Activated CD4-positive, alpha-beta T cell treated with anti-CD3 and anti-CD28 coated beads for 36 hours (primary cell): ENCODE measurements at regions of chr9 and their contacts with region 1.

Region 1: GRCh38 chr9:112097712-112098688 is 77.1 kb downstream of the SUSD1 start:
- DNase-seq: peak; percentile 82
- ATAC-seq: peak; percentile 90
- H3K4me3 Mint-ChIP-seq: no peak overlapping the region
- H3K27ac Mint-ChIP-seq: no peak overlapping the region
- H3K4me1 Mint-ChIP-seq: peaks cover 13% of the 10 kb centered on the region
- H3K27me3 Mint-ChIP-seq: no peaks in the 10 kb centered on the region

Region 2: GRCh38 chr9:112037281-112038016 is 60.6 kb before region 1 on chr9:
- CTCF ChIA-PET with region 1: no interaction called
- POLR2A ChIA-PET with region 1: no interaction called
- intact Hi-C with region 1: no loop called
- DNase-seq: peak; percentile 82
- ATAC-seq: peak; percentile 95
- H3K4me3 Mint-ChIP-seq: no peak overlapping the region
- H3K27ac Mint-ChIP-seq: peak overlapping the region; percentile 74
- H3K4me1 Mint-ChIP-seq: peaks cover 64% of the 10 kb centered on the region
- H3K27me3 Mint-ChIP-seq: peaks cover 11% of the 10 kb centered on the region

Region 3: DNA sequence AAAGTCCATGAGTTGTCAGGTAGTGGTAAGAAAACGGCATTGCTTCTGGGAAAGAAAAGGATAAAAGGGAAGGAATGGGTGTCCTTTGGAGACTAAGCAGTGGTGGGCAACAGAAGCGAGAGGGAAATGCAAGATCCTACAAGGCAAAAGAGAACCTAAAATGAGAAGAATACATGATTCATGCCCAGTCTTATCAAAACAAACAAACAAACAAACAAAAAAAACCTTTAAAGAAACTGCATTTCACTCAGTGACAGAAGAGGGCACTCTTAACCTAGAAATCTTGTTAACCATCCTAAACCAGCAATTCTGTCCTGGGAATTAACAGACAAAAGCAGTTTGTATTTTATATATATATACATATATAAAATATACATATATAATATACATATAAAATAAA is 11.4 kb before region 1 on chr9:
- CTCF ChIA-PET with region 1: interaction called, 17 read pairs
- POLR2A ChIA-PET with region 1: interaction called, 5 read pairs
- intact Hi-C with region 1: no loop called
- DNase-seq: no peak
- ATAC-seq: no peak
- H3K4me3 Mint-ChIP-seq: no peak overlapping the region
- H3K27ac Mint-ChIP-seq: no peak overlapping the region
- H3K4me1 Mint-ChIP-seq: no peaks in the 10 kb centered on the region
- H3K27me3 Mint-ChIP-seq: no peaks in the 10 kb centered on the region

Region 4: DNA sequence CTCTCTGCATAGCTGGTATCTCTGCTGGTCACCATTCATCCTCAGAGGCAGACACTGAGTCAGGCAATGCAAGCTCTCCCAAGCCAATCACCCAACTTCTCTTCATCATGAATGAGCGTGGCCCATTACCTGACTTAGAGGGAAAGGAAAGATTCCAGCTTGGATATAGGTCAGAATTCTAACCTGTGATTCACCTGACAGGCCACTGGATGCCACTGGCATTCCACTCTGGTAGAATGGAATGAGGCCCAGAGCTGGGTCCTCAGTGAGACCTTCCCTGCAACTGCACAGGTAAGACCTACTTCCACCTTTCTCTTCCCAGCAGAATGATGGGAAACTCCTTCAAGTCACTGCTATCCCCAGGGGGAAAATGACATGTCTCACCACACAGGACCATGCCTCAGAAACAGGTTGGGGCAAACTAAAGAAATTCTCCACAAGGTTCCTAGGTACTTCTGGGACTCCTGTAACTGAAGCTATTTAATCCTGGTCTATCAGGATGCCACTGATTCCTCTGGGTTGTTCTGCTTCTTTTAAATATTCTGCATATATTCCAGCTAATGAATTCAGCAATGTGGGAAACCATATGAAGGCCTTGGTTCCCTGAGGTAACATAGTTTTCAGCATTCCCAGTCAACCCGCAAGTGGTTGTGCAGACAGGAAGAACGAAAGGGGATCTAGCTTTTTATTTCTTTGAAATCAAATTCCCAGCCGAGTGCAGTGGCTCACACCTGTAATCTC is 15.1 kb after region 1 on chr9:
- CTCF ChIA-PET with region 1: interaction called, 17 read pairs
- POLR2A ChIA-PET with region 1: no interaction called
- intact Hi-C with region 1: no loop called
- DNase-seq: peak; percentile 31
- ATAC-seq: peak; percentile 47
- H3K4me3 Mint-ChIP-seq: no peak overlapping the region
- H3K27ac Mint-ChIP-seq: no peak overlapping the region
- H3K4me1 Mint-ChIP-seq: no peaks in the 10 kb centered on the region
- H3K27me3 Mint-ChIP-seq: no peaks in the 10 kb centered on the region

Region 5: GRCh38 chr9:112361601-112362000 is 263.6 kb after region 1 on chr9:
- CTCF ChIA-PET with region 1: interaction called, 61 read pairs
- POLR2A ChIA-PET with region 1: no interaction called
- intact Hi-C with region 1: loop called (anchors 1 kb)
- DNase-seq: no peak
- ATAC-seq: no peak
- H3K4me3 Mint-ChIP-seq: no peak overlapping the region
- H3K27ac Mint-ChIP-seq: no peak overlapping the region
- H3K4me1 Mint-ChIP-seq: peaks cover 11% of the 10 kb centered on the region
- H3K27me3 Mint-ChIP-seq: peaks cover 6% of the 10 kb centered on the region

Region 6: DNA sequence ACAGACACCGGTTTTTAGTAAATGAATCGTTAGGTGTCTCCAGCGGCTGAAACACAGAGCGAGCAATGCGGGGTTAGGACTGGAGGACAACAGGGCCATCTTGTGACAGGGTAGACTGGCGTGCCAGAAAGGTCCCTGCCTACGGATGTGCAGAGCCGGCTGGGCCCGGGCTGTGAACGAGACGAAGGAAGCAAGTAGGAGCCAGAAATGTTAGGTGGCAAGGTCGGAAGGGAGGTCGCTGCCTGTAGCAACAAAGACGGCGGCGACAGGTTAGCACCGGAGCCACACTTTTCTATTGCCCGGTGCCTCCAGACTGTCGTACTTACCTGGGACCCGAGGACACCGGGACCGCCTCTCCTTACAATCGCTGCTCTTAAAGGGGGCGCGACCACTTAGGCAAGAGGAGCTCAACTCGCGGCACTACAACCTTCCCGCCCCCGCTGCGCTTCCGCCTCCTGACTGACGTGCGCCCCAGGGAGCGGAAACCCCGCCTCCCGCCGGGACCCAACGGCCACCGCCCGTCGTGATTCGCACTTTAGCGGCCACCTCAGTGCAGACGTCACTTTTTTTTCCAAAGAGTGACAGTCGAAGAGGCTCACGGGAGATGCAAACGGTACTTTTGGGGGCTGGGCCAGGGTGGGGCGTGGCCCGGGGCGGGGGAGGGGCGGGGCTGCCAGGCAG is 619.8 kb after region 1 on chr9 and contains the start of gene INIP:
- CTCF ChIA-PET with region 1: no interaction called
- POLR2A ChIA-PET with region 1: no interaction called
- intact Hi-C with region 1: loop called in 1 of 2 experiments (anchors 10 kb)
- DNase-seq: peak; percentile 99
- ATAC-seq: peak; percentile 93
- H3K4me3 Mint-ChIP-seq: peak within 1 kb of the TSS; percentile 89
- H3K27ac Mint-ChIP-seq: peak within 1 kb of the TSS; percentile 97
- H3K4me1 Mint-ChIP-seq: peaks cover 35% of the 10 kb centered on the region
- H3K27me3 Mint-ChIP-seq: no peaks in the 10 kb centered on the region
- total RNA-seq, gene INIP: 37.3 to 37.7 TPM